Endothelial cell of umbilical vein (primary cell): ENCODE measurements at regions of chr14 and their contacts with region 1.

Region 1: DNA sequence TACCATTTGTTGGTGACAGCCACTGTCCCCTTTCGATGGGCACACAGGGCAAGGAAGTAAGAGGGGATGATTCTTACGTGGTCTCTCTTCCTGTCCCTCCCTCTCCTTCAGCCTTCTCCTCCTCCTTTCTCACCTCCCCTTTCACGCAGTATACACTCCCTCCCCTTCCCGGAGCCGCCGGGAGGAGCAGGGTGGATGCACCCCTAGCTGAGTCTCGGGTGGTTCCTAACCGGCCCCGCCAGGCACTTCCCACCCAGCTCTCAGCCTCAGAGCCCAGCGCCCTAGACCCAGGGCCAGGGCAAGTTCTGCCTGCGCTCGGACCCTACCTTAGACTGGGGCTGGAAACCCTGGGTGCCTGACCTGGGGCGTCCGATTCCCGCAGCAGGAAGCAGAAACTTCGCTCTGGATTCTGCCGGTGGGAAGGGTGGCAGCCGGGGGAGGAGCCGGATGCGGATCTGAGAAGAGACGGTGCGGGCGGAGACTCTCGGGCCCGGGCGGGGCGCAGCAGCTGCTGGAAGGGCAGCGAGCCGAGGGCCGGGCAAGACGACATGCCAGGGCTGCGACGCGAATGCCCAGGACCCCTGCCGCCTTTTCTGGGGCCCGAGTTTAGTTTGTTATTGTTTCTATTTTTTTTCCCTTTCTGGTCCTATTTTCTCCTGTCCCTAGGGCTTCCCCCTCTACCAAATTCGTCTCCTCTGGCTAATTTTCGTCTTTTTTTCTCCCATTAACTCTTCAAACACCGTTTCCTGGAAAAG is at the start of gene TEP1:
- DNase-seq: peak; percentile 80
- H3K4me3 ChIP-seq: peak within 1 kb of the TSS; percentile 80 to 97 (median 86)
- H3K27ac ChIP-seq: peak within 1 kb of the TSS; percentile 85
- H3K4me1 ChIP-seq: peaks cover 17% of the 10 kb centered on the region
- H3K27me3 ChIP-seq: no peaks in the 10 kb centered on the region
- CTCF ChIP-seq: no peak
- POLR2A ChIP-seq: peak; percentile 78
- total RNA-seq, gene TEP1: 40.3 and 44.6 TPM in 2 replicates

Region 2: GRCh38 chr14:20332788-20333493 is 80.3 kb before region 1 on chr14 and contains the start of gene CCNB1IP1:
- CTCF ChIA-PET with region 1: interaction called, 8 read pairs
- POLR2A ChIA-PET with region 1: no interaction called
- dilution Hi-C with region 1: no loop called
- intact Hi-C with region 1: loop called (anchors 2 kb)
- DNase-seq: peak; percentile 87
- H3K4me3 ChIP-seq: peak within 1 kb of the TSS; percentile 48 to 93 (median 65)
- H3K27ac ChIP-seq: peak within 1 kb of the TSS; percentile 71
- H3K4me1 ChIP-seq: peaks cover 19% of the 10 kb centered on the region
- H3K27me3 ChIP-seq: no peaks in the 10 kb centered on the region
- CTCF ChIP-seq: no peak
- POLR2A ChIP-seq: peak; percentile 69
- total RNA-seq, gene CCNB1IP1: 35.5 and 38.9 TPM in 2 replicates

Region 3: DNA sequence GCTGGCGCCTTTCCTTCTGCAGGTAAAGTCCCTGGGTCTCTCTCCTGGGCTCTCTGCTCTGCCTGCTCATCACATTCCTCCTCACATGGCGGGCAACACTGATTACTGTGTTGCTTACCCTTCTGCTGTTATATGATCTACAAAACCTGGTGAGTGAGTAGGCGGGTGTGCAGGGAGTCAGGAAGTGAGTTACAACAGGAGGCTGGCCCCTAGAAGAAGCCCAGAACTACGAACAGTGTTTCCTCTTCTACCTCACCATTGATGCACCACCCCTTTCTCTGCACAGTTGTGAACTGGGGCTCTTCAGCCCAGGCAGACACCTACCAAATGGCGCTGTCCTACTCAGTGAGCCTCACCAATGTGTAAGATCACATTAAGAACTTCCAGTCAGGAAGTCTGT is 27.7 kb after region 1 on chr14:
- CTCF ChIA-PET with region 1: interaction called, 13 read pairs
- POLR2A ChIA-PET with region 1: no interaction called
- dilution Hi-C with region 1: no loop called
- intact Hi-C with region 1: no loop called
- DNase-seq: peak; percentile 75
- H3K4me3 ChIP-seq: no peak overlapping the region
- H3K27ac ChIP-seq: no peak overlapping the region
- H3K4me1 ChIP-seq: peaks cover 8% of the 10 kb centered on the region
- H3K27me3 ChIP-seq: peaks cover 2 to 3% of the 10 kb centered on the region in 2 experiments
- CTCF ChIP-seq: no peak
- POLR2A ChIP-seq: no peak

Region 4: DNA sequence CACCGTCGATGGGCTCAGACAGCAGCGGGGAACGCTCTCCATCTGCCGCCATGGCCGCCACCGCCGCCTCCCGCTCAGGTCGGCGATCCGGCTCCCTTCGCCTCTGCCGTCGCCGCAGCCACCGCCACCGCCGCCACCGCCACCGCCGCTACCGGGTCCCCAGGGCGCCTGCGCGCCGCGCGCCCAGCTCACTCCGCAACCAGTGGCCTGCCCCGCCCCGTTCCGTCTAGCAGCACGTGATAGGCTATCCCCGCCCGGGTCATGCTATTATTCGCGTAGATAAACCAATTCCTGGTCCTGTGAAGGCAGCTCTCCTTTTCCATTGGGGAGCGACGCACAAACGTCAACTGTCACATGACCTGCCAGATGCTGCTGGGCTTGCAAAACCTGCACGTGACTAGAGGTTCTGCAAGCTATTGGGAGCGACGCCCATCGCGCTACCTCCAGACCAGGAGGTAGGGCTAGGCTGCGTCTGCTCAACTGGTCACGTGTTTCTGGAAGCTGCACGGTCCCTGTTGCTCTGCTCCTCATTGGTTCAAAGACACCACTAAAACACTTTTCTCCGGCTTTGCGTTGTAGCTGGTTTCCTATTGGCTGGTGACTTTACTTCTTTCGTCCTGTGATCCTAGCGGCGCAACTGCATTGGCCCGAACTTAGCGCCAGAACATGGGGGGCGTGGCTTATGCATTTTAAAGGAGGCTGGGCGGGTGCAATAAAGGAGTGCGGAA is 48.2 kb after region 1 on chr14 and contains the start of gene PIP4P1:
- CTCF ChIA-PET with region 1: interaction called, 70 read pairs
- POLR2A ChIA-PET with region 1: interaction called, 4 read pairs
- dilution Hi-C with region 1: no loop called
- intact Hi-C with region 1: no loop called
- DNase-seq: peak; percentile 100
- H3K4me3 ChIP-seq: peak within 1 kb of the TSS; percentile 43 to 78 (median 66)
- H3K27ac ChIP-seq: peak within 1 kb of the TSS; percentile 35
- H3K4me1 ChIP-seq: peaks cover 18% of the 10 kb centered on the region
- H3K27me3 ChIP-seq: peaks cover 2 to 8% of the 10 kb centered on the region in 2 experiments
- CTCF ChIP-seq: no peak
- POLR2A ChIP-seq: no peak
- total RNA-seq, gene PIP4P1: 28.6 and 33.6 TPM in 2 replicates

Region 5: DNA sequence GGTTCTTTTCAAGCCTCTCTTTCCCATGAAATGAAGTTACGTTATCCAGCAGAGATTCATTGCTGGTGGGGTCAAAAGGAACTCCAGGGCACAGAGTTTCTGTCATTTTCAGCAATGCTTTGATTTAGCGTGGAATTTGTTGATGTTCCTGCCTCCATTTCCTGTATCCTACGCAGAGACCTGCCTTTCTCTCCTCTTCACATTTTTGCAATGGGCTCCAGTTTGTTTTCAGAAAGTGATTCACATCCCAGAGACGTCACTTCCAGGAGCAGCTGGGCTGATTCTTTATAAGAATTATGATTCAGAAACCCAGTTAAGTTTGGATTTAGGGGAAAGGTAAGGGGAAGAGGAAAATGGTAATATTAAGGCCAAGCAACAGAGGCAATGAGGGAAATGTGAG is 103.7 kb after region 1 on chr14:
- CTCF ChIA-PET with region 1: interaction called, 5 read pairs
- POLR2A ChIA-PET with region 1: no interaction called
- dilution Hi-C with region 1: no loop called
- intact Hi-C with region 1: loop called (anchors 5 kb)
- DNase-seq: peak; percentile 82
- H3K4me3 ChIP-seq: peak overlapping the region in 1 of 3 experiments; percentile 2
- H3K27ac ChIP-seq: peak overlapping the region; percentile 81
- H3K4me1 ChIP-seq: peaks cover 31% of the 10 kb centered on the region
- H3K27me3 ChIP-seq: no peaks in the 10 kb centered on the region
- CTCF ChIP-seq: no peak
- POLR2A ChIP-seq: no peak

Region 6: DNA sequence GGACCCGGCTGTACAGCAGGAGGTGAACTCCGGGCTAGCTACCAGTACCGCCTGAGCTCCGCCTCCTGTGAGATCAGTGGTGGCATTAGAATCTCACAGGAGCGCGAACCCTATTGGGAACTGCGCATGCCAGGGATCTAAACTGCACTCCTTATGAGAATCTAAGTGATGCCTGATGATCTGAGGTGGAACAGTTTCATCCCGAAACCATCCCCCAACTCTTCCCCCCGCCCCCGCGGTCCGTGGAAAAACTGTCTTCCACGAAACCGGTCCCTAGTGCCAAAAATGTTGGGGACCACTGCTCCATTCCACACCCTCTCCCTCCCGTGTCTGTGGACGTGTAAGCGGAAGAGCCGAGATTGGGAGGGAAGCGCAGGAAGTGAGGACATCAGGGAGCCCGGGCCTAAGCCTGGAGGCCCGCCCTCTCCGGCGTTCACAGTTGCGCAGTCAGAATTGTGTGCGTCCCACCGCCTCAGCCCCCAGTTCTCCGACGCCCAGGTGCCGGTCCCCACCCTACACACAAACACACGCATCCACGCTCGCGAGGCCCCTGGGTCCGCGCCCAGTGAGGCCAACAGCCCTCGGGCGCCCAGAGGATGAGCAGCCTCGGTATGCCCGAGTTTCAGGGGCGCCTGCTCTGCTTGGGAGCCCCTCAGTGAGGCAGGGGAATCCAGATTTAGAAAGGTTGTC is 269.4 kb after region 1 on chr14:
- CTCF ChIA-PET with region 1: interaction called, 8 read pairs
- POLR2A ChIA-PET with region 1: interaction called, 4 read pairs
- dilution Hi-C with region 1: no loop called
- intact Hi-C with region 1: loop called (anchors 1 kb)
- DNase-seq: peak; percentile 95
- H3K4me3 ChIP-seq: peak overlapping the region; percentile 40 to 84 (median 80)
- H3K27ac ChIP-seq: peak overlapping the region; percentile 97
- H3K4me1 ChIP-seq: peaks cover 27% of the 10 kb centered on the region
- H3K27me3 ChIP-seq: no peaks in the 10 kb centered on the region
- CTCF ChIP-seq: no peak
- POLR2A ChIP-seq: peak; percentile 89